Activated CD8-positive, alpha-beta T cell treated with anti-CD3 and anti-CD28 coated beads for 36 hours (primary cell): ENCODE measurements at regions of chr17 and their contacts with region 1.

Region 1: GRCh38 chr17:7484067-7484918 is at the start of gene POLR2A:
- DNase-seq: peak; percentile 96
- ATAC-seq: peak; percentile 67
- H3K4me3 Mint-ChIP-seq: peak within 1 kb of the TSS; percentile 96
- H3K27ac Mint-ChIP-seq: peak within 1 kb of the TSS; percentile 99
- H3K4me1 Mint-ChIP-seq: peaks cover 63% of the 10 kb centered on the region
- H3K27me3 Mint-ChIP-seq: no peaks in the 10 kb centered on the region
- CTCF ChIP-seq: no peak
- total RNA-seq, gene POLR2A: 219 to 223 TPM

Region 2: DNA sequence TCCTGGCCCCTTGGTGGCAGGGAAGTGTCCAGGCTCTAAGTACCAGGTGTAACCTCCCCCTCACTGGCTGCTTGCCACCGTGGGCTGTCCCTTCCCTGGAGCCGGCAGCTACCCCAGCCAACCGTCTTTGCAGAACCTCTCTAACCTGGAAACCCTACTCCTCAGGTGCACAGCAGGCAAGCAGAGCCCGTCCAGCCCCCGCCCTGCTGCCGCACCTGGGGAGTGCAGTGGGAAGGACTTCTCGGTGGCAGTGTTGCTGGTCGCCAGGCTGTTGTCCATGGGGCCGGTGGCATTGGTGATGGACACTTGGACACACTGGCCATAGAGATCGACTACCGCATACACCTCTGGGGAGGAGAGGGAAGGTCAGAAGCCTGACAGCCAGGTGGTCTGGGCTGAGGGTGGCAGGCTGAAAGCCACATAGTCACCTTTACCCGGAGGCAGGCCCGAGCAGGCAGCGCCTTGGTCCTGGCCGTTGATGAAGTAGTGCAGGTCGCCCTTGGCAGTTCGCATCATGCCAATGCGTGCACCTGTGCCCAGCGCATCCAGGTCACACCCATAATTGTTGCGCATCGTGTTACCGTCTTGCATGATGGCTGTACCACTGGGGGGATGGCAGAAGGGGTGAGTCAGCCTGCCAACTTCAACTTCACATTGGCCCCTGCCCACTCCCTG is 161.6 kb before region 1 on chr17:
- CTCF ChIA-PET with region 1: no interaction called
- POLR2A ChIA-PET with region 1: no interaction called
- intact Hi-C with region 1: no loop called
- DNase-seq: no peak
- ATAC-seq: no peak
- H3K4me3 Mint-ChIP-seq: no peak overlapping the region
- H3K27ac Mint-ChIP-seq: no peak overlapping the region
- H3K4me1 Mint-ChIP-seq: peaks cover 19% of the 10 kb centered on the region
- H3K27me3 Mint-ChIP-seq: no peaks in the 10 kb centered on the region
- CTCF ChIP-seq: no peak

Region 3: DNA sequence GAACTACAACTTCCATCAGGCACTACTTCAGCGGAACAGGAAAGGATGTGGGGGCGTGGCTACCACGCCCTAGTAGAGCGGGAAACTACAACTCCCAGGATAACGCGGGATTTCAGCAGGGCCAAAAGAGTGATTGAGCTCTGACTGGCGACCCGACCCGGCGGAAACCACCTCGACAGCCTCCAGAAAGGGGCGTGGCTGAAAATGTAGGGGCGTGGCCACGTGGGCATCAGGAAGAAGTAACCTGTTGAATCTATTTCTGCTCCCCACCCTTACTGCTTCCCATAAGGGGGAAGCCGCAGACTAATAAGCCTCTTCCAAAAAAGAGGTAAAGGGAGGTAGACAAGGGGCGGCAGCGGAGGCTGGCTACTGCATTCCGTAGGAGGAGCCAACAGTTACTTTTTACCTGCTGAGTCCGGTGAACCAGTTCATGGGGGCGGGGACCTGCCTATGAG is 49.0 kb before region 1 on chr17 and contains the start of gene TMEM102:
- CTCF ChIA-PET with region 1: interaction called, 49 read pairs
- POLR2A ChIA-PET with region 1: interaction called, 67 read pairs
- intact Hi-C with region 1: loop called (anchors 5 kb)
- DNase-seq: peak; percentile 99
- ATAC-seq: peak; percentile 82
- H3K4me3 Mint-ChIP-seq: peak within 1 kb of the TSS; percentile 94
- H3K27ac Mint-ChIP-seq: peak within 1 kb of the TSS; percentile 97
- H3K4me1 Mint-ChIP-seq: peaks cover 23% of the 10 kb centered on the region
- H3K27me3 Mint-ChIP-seq: peaks cover 12% of the 10 kb centered on the region
- CTCF ChIP-seq: no peak
- total RNA-seq, gene TMEM102: 12.5 to 14.2 TPM

Region 4: DNA sequence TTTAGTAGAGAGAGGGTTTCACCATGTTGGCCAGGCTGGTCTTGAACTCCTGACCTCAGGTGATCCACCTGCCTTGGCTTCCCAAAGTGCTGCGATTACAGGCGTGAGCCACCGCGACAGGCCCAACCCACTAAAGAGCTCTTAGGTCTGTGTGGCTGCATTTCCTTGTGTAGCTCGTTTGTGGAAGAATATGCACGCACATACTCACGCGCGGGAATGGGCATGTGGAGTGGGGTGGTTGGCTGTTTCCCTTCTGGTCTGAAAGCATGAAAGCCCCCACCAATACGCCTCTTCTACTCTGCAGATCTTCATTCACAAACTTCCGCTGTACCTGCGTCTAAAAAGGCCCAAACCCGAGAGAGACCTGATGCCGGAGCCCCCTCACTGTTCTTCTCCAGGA is 29.3 kb before region 1 on chr17:
- CTCF ChIA-PET with region 1: no interaction called
- POLR2A ChIA-PET with region 1: interaction called, 122 read pairs
- intact Hi-C with region 1: no loop called
- DNase-seq: no peak
- ATAC-seq: no peak
- H3K4me3 Mint-ChIP-seq: peak overlapping the region; percentile 95
- H3K27ac Mint-ChIP-seq: peak overlapping the region; percentile 95
- H3K4me1 Mint-ChIP-seq: peaks cover 21% of the 10 kb centered on the region
- H3K27me3 Mint-ChIP-seq: no peaks in the 10 kb centered on the region
- CTCF ChIP-seq: no peak

Region 5: DNA sequence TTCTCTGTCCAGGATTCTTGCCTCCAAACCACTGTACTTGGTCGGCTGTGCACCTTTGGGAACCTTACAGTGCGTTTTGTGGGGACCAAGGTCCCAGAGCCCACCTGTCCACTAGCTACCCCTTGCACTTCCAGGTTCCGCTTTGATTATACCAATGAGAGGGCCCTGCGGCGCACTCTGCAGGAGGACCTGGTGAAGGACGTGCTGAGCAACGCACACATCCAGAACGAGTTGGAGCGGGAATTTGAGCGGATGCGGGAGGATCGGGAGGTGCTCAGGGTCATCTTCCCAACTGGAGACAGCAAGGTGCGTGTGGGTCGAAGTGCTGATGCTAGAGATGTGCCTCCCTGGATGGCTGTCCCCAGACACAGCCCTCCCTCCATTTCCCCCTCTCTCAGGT is 18.7 kb after region 1 on chr17:
- CTCF ChIA-PET with region 1: interaction called, 3 read pairs
- POLR2A ChIA-PET with region 1: interaction called, 10 read pairs
- intact Hi-C with region 1: no loop called
- DNase-seq: peak; percentile 24
- ATAC-seq: peak; percentile 50
- H3K4me3 Mint-ChIP-seq: no peak overlapping the region
- H3K27ac Mint-ChIP-seq: no peak overlapping the region
- H3K4me1 Mint-ChIP-seq: no peaks in the 10 kb centered on the region
- H3K27me3 Mint-ChIP-seq: no peaks in the 10 kb centered on the region
- CTCF ChIP-seq: no peak

Region 6: GRCh38 chr17:7583253-7584109 is 99.2 kb after region 1 on chr17 and contains the start of gene MPDU1:
- CTCF ChIA-PET with region 1: no interaction called
- POLR2A ChIA-PET with region 1: interaction called, 16 read pairs
- intact Hi-C with region 1: no loop called
- DNase-seq: peak; percentile 97
- ATAC-seq: peak; percentile 77
- H3K4me3 Mint-ChIP-seq: peak within 1 kb of the TSS; percentile 94
- H3K27ac Mint-ChIP-seq: peak within 1 kb of the TSS; percentile 99
- H3K4me1 Mint-ChIP-seq: peaks cover 55% of the 10 kb centered on the region
- H3K27me3 Mint-ChIP-seq: no peaks in the 10 kb centered on the region
- CTCF ChIP-seq: no peak
- total RNA-seq, gene MPDU1: 50.9 to 51.4 TPM